ENCODE measurements at regions of chr17 and their contacts with region 1.

Region 1: DNA sequence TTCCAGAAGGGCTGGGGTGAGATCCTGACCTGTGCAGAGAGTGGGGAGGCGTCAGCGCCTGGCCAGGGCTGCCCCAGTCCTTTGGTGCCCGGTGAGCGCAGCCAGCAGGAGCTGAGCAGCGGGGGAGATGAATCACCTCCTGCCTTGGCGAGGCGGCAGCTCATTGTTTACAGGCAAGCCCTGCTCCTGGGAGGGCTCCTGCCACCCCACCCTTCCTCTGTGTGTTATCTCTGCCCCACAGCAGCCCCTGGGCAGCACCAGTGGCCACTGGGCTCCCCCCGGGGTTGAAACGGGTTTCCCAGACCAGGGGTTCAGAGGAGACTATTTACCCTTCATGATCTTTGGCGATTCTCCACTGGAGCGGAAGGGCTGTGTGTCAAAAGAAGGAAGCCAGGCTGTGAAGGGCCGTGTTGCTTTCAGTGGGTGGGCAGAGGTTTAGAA is 14.1 kb upstream of the ITGB4 start:
- DNase-seq: peak; percentile 94
- ATAC-seq: peak; percentile 95
- H3K4me3 ChIP-seq: peak overlapping the region in 1 of 2 experiments; percentile 43; a peak in 2 of 4 replicates
- H3K27ac ChIP-seq: peak overlapping the region; percentile 85
- H3K4me1 ChIP-seq: peaks cover 55 to 86% of the 10 kb centered on the region in 2 experiments
- H3K27me3 ChIP-seq: no peaks in the 10 kb centered on the region
- CTCF ChIP-seq: no peak
- POLR2A ChIP-seq: no peak
- RAD21 ChIP-seq: no peak

Region 2: DNA sequence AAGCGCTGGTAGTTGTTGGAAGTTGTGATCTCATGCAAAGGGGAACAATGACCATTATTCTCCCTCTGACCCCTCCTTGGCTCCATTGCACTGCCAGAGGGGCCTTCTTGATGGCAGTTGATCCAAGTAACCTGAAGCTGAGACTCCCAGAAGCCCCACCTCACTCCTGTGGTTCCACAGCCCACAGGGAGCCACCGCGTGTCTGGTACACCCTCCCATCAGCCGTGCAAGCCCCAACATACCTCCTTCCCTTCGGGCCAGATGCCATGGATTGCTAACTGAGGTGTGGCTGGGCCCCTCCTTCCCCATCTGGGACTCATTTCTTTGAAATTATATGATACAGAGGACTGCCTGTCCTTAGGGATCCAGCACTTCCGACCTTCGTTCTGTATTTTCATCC is 22.2 kb before region 1 on chr17:
- CTCF ChIA-PET with region 1: interaction called, 16 read pairs
- POLR2A ChIA-PET with region 1: interaction called, 17 read pairs
- RAD21 ChIA-PET with region 1: interaction called in 1 of 2 experiments, 5 read pairs
- intact Hi-C with region 1: no loop called
- DNase-seq: no peak
- ATAC-seq: peak; percentile 70
- H3K4me3 ChIP-seq: peak overlapping the region in 1 of 2 experiments; percentile 45; a peak in 3 of 4 replicates
- H3K27ac ChIP-seq: peak overlapping the region; percentile 67
- H3K4me1 ChIP-seq: peaks cover 71 to 100% of the 10 kb centered on the region in 2 experiments
- H3K27me3 ChIP-seq: no peaks in the 10 kb centered on the region
- CTCF ChIP-seq: no peak
- POLR2A ChIP-seq: no peak
- RAD21 ChIP-seq: no peak

Region 3: DNA sequence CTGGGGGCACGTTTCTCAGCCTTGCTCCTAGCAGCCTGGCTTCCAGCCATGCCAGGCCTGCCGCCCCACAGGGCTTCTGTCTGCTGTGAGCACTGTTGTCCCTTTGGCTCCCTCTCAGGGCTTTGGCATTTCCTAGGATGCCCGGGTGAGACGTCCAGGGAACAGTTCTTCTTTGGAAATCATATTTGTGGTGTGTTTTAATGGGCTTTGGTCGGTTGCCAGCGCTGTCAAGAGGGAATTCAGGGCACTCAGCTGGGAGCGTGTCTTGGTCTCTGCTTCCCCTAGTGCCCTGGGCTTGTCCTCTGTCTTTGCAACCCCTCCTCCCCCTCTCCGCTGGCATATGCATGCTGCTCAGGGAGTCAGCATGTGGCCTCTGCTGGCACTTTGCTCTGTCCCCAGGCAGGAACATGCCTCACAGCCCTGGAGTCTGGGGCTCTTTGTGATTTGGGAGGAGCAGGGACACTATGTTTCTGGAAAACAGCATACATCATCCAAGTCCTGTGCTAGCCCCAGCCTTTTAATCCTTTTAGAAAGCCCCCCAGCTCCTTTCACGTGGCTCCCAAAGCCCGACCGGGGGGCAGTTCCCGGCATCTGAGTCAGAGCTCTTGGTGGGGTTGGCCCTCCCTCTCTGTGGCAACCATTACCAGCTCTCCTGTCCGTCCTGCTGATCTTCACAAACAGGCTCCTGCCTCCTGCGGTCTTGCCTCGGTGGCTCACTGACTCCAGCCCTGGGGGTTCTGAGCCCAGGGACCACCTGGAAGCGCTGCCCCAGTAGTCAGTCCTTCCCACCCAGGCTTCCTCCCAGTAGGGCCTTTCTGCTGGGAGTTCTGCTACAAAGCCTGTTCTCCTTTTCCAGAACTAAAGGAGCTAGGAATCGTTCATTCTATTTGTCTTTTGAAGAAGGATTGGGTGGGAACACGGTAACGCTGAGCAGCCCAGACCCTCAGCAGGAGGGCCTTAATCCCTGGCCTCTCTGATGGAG is 13.4 kb before region 1 on chr17:
- CTCF ChIA-PET with region 1: interaction called, 17 read pairs
- POLR2A ChIA-PET with region 1: interaction called, 12 read pairs
- RAD21 ChIA-PET with region 1: interaction called in 1 of 2 experiments, 4 read pairs
- intact Hi-C with region 1: no loop called
- DNase-seq: peak; percentile 76
- ATAC-seq: peak; percentile 69
- H3K4me3 ChIP-seq: no peak overlapping the region
- H3K27ac ChIP-seq: peak overlapping the region; percentile 94
- H3K4me1 ChIP-seq: peaks cover 85 to 99% of the 10 kb centered on the region in 2 experiments
- H3K27me3 ChIP-seq: no peaks in the 10 kb centered on the region
- CTCF ChIP-seq: no peak; a peak in 1 of 6 replicates
- POLR2A ChIP-seq: no peak
- RAD21 ChIP-seq: peak; percentile 42; the same call in 1 of the 2 replicates

Region 4: DNA sequence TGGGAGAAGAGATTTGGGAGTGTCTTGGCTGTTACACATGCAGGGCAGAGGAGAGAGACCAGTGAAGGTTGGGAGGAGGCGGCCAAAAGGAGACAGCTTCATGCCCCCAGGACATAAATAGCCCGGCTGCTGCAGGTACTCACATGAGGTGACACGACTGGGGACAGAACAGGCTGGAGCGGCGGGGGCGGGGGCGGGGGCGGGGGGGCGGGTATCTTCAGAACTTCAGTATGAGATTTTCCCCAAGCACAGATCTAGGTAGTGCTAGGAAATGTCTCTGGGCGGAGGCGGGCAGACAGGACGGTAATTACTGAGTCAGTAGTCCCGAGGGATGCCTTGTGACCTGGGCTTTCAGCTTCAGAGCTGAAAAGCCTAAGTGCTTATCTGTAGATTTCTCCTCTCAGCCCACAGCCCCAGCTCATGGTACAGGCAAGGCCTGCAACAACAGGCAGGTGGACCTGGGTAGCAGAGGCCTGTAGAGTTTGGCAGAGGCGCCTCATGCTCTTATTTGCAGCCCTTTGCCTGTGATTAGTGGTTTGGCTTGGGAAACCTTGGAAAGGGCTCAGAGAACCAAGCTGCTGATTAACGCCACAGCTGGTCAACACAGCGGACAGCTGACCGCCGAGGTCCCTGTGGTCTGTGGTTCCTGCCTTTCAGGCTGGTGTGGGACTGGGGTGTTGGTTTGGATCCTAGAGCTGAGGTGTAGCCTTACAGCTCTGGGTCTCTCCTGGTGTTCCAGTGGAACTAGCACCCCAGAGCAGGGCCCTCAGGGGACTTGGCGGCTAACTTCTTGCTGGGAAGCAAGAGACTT is 102.0 kb after region 1 on chr17:
- CTCF ChIA-PET with region 1: no interaction called
- POLR2A ChIA-PET with region 1: no interaction called
- RAD21 ChIA-PET with region 1: no interaction called
- intact Hi-C with region 1: no loop called
- DNase-seq: no peak
- ATAC-seq: no peak
- H3K4me3 ChIP-seq: no peak overlapping the region
- H3K27ac ChIP-seq: peak overlapping the region; percentile 10; the same call in 1 of the 2 replicates
- H3K4me1 ChIP-seq: no peaks in the 10 kb centered on the region
- H3K27me3 ChIP-seq: no peaks in the 10 kb centered on the region
- CTCF ChIP-seq: no peak
- POLR2A ChIP-seq: no peak
- RAD21 ChIP-seq: no peak

Region 5: GRCh38 chr17:75950821-75951554 is 243.8 kb after region 1 on chr17:
- CTCF ChIA-PET with region 1: no interaction called
- POLR2A ChIA-PET with region 1: no interaction called
- RAD21 ChIA-PET with region 1: no interaction called
- intact Hi-C with region 1: no loop called
- DNase-seq: no peak
- ATAC-seq: no peak
- H3K4me3 ChIP-seq: no peak overlapping the region
- H3K27ac ChIP-seq: no peak overlapping the region
- H3K4me1 ChIP-seq: no peaks in the 10 kb centered on the region
- H3K27me3 ChIP-seq: no peaks in the 10 kb centered on the region
- CTCF ChIP-seq: no peak
- POLR2A ChIP-seq: no peak
- RAD21 ChIP-seq: no peak

Measured in HCT116 (cell line).